ENCODE measurements at regions of chr14 and their contacts with region 1.

Region 1: DNA sequence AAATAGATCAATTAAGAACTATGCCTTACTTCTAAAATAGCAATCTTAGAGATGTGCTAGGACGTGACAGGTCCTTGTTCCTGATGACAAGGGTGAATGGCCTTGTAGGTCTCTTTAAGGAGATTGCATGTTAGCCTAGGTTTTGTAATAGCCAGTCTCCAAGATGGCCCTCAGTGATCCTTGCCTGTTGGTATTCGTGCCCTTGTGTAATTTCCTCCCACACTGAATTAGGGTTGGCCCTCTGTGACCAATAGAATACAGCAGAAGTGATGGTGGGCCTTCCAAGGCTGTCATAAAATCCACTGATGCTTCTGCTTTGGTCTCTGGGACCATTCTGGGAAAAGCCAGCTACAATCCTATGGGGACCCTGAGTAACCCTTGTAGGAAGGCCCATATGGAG is 38.2 kb upstream of the SNX6 start:
- DNase-seq: no peak
- ATAC-seq: no peak
- H3K4me3 Mint-ChIP-seq: no peak overlapping the region
- H3K27ac Mint-ChIP-seq: no peak overlapping the region
- H3K4me1 Mint-ChIP-seq: peaks cover 6% of the 10 kb centered on the region
- H3K27me3 Mint-ChIP-seq: no peaks in the 10 kb centered on the region

Region 2: GRCh38 chr14:34682787-34683321 is 14.7 kb after region 1 on chr14:
- CTCF ChIA-PET with region 1: interaction called, 13 read pairs
- POLR2A ChIA-PET with region 1: no interaction called
- intact Hi-C with region 1: no loop called
- DNase-seq: peak; percentile 36
- ATAC-seq: peak; percentile 94
- H3K4me3 Mint-ChIP-seq: no peak overlapping the region
- H3K27ac Mint-ChIP-seq: no peak overlapping the region
- H3K4me1 Mint-ChIP-seq: peaks cover 9% of the 10 kb centered on the region
- H3K27me3 Mint-ChIP-seq: no peaks in the 10 kb centered on the region

Region 3: GRCh38 chr14:34931206-34931605 is 263.1 kb after region 1 on chr14:
- CTCF ChIA-PET with region 1: no interaction called
- POLR2A ChIA-PET with region 1: no interaction called
- intact Hi-C with region 1: no loop called
- DNase-seq: peak; percentile 25
- ATAC-seq: peak; percentile 72
- H3K4me3 Mint-ChIP-seq: peak overlapping the region; percentile 47
- H3K27ac Mint-ChIP-seq: peak overlapping the region; percentile 100
- H3K4me1 Mint-ChIP-seq: peaks cover 44% of the 10 kb centered on the region
- H3K27me3 Mint-ChIP-seq: no peaks in the 10 kb centered on the region

Region 4: DNA sequence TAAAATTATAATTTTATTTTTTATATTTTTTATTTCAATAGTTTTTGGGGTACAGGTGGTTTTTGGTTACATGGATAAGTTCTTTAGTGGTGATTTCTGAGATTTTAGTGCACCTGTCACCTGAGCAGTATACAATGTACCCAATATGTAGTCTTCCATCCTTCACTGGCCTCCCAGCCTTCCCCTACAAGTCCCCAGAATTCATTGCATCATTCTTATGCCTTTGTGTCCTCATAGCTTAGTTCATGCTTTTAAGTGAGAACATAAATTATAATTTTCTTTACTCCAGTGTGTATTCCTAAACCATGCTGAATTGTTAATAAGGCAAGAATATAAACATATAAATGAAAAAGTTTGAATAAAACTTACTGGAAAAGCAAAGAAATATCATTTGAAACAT is 755.5 kb after region 1 on chr14:
- CTCF ChIA-PET with region 1: no interaction called
- POLR2A ChIA-PET with region 1: no interaction called
- intact Hi-C with region 1: loop called (anchors 2 to 5 kb)
- DNase-seq: no peak
- ATAC-seq: no peak
- H3K4me3 Mint-ChIP-seq: no peak overlapping the region
- H3K27ac Mint-ChIP-seq: no peak overlapping the region
- H3K4me1 Mint-ChIP-seq: peaks cover 23% of the 10 kb centered on the region
- H3K27me3 Mint-ChIP-seq: no peaks in the 10 kb centered on the region

Measured in activated CD4-positive, alpha-beta T cell treated with anti-CD3 and anti-CD28 coated beads for 36 hours (primary cell).